WTC11 (cell line): ENCODE measurements at regions of chr5 and their contacts with region 1.

Region 1: GRCh38 chr5:141475625-141476131 is at the start of gene PCDHGC3:
- DNase-seq: peak; percentile 92
- ATAC-seq: peak; percentile 96
- H3K4me3 Mint-ChIP-seq: peak within 1 kb of the TSS; percentile 92
- H3K27ac Mint-ChIP-seq: peak within 1 kb of the TSS; percentile 93
- H3K4me1 Mint-ChIP-seq: peaks cover 35% of the 10 kb centered on the region
- H3K27me3 Mint-ChIP-seq: peaks cover 28% of the 10 kb centered on the region
- CTCF ChIP-seq: no peak
- total RNA-seq, gene PCDHGC3: 28.1 to 29.4 TPM (median 29.1 TPM) in 3 replicates

Region 2: GRCh38 chr5:141420855-141421496 is 54.7 kb before region 1 on chr5 and contains the start of gene PCDHGA11:
- CTCF ChIA-PET with region 1: interaction called, 77 read pairs
- POLR2A ChIA-PET with region 1: no interaction called
- DNase-seq: peak; percentile 77
- ATAC-seq: peak; percentile 52
- H3K4me3 Mint-ChIP-seq: peak within 1 kb of the TSS; percentile 81
- H3K27ac Mint-ChIP-seq: peak within 1 kb of the TSS; percentile 47
- H3K4me1 Mint-ChIP-seq: peaks cover 26% of the 10 kb centered on the region
- H3K27me3 Mint-ChIP-seq: peaks cover 14% of the 10 kb centered on the region
- CTCF ChIP-seq: peak; percentile 68
- total RNA-seq, gene PCDHGA11: 7.0 to 8.4 TPM (median 7.1 TPM) in 3 replicates

Region 3: GRCh38 chr5:141430332-141431113 is 45.2 kb before region 1 on chr5 and contains the start of gene PCDHGA12:
- CTCF ChIA-PET with region 1: interaction called, 16 read pairs
- POLR2A ChIA-PET with region 1: interaction called, 3 read pairs
- DNase-seq: no peak
- ATAC-seq: peak; percentile 43; the same call in 1 of the 2 replicates
- H3K4me3 Mint-ChIP-seq: no peak within 1 kb of the TSS
- H3K27ac Mint-ChIP-seq: no peak within 1 kb of the TSS
- H3K4me1 Mint-ChIP-seq: no peaks in the 10 kb centered on the region
- H3K27me3 Mint-ChIP-seq: no peaks in the 10 kb centered on the region
- CTCF ChIP-seq: no peak
- total RNA-seq, gene PCDHGA12: 1.6 to 2.1 TPM (median 1.9 TPM) in 3 replicates

Region 4: DNA sequence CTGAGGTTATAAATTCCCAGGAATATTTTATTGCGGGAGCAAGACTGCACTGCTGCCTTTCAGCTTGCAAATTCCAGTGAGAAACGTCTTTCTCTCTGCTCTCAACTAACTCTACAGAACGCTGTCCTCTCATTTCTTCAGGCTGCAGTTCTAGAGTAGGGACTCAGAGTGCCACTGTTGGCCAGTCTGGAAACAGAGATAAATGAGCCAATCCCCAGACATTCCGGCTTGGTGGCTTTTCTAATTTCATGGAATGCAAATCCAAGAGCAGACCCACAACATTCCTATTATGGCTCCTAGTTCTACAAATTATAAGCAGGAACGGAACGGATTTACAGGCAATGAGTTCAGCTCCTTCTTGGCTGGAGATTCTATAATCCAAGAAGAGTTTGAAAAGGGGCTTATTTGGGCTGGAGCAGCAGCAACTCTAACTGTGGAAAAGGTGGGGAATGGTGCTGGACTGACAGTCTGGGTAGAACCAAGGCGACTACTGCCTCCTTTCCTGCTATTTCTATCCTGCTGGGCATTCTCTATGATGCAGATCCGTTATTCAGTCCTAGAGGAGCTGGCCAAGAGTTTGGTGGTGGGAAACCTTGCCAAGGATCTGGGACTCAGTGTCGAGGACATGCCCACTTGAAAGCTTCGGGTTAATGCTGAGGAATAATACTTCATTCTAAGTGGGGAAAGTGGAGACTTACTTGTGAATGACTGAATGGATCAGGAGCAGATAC is 36.1 kb before region 1 on chr5:
- CTCF ChIA-PET with region 1: interaction called, 13 read pairs
- POLR2A ChIA-PET with region 1: no interaction called
- DNase-seq: no peak
- ATAC-seq: peak; percentile 76
- H3K4me3 Mint-ChIP-seq: no peak overlapping the region
- H3K27ac Mint-ChIP-seq: no peak overlapping the region; the same call in 1 of the 2 replicates
- H3K4me1 Mint-ChIP-seq: peaks cover 10% of the 10 kb centered on the region
- H3K27me3 Mint-ChIP-seq: no peaks in the 10 kb centered on the region
- CTCF ChIP-seq: no peak

Region 5: GRCh38 chr5:141465351-141465750 is 10.3 kb before region 1 on chr5:
- CTCF ChIA-PET with region 1: interaction called, 26 read pairs
- POLR2A ChIA-PET with region 1: no interaction called
- DNase-seq: no peak
- ATAC-seq: no peak
- H3K4me3 Mint-ChIP-seq: no peak overlapping the region
- H3K27ac Mint-ChIP-seq: peak overlapping the region; percentile 17; the same call in 1 of the 2 replicates
- H3K4me1 Mint-ChIP-seq: no peaks in the 10 kb centered on the region
- H3K27me3 Mint-ChIP-seq: no peaks in the 10 kb centered on the region
- CTCF ChIP-seq: no peak

Region 6: GRCh38 chr5:141492168-141492885 is 16.6 kb after region 1 on chr5:
- CTCF ChIA-PET with region 1: interaction called, 113 read pairs
- POLR2A ChIA-PET with region 1: interaction called, 6 read pairs
- DNase-seq: peak; percentile 49
- ATAC-seq: peak; percentile 10
- H3K4me3 Mint-ChIP-seq: peak overlapping the region; percentile 66
- H3K27ac Mint-ChIP-seq: no peak overlapping the region
- H3K4me1 Mint-ChIP-seq: peaks cover 57% of the 10 kb centered on the region
- H3K27me3 Mint-ChIP-seq: peaks cover 52% of the 10 kb centered on the region
- CTCF ChIP-seq: no peak

Region 7: GRCh38 chr5:141585594-141585993 is 109.9 kb after region 1 on chr5:
- CTCF ChIA-PET with region 1: no interaction called
- POLR2A ChIA-PET with region 1: no interaction called
- DNase-seq: no peak
- ATAC-seq: no peak
- H3K4me3 Mint-ChIP-seq: no peak overlapping the region
- H3K27ac Mint-ChIP-seq: no peak overlapping the region
- H3K4me1 Mint-ChIP-seq: no peaks in the 10 kb centered on the region
- H3K27me3 Mint-ChIP-seq: no peaks in the 10 kb centered on the region
- CTCF ChIP-seq: no peak